T-cell (primary cell): ENCODE measurements at regions of chrX and their contacts with region 1.

Region 1: DNA sequence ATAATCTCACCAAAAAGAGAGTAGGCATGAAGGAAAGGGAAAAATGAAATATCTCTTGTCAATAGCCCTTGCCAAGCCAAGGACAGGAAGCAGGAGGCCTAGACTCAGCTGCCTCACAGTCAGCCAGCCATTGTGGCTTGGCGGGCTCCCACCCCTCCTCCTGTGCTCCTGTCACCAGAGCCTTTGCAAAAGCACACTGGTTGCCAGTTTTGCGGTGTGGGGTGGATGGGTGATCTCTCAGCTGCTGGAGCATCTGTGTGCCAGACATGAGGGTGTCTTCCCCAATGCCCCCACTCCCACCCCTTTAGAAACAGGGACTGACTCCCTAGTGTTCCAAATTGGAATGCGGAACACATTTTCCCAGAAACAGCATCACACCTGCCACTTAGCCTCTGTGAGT is 26.1 kb downstream of the ARHGEF6 start:
- DNase-seq: peak in 31 of 35 experiments; percentile 10 to 57 (median 29)
- ATAC-seq: peak; percentile 64 to 92 (median 76)
- H3K4me3 ChIP-seq: no peak overlapping the region
- H3K4me3 Mint-ChIP-seq: peak overlapping the region in 1 of 3 donors; percentile 6
- H3K27ac ChIP-seq: no peak overlapping the region
- H3K27ac Mint-ChIP-seq: peak overlapping the region in 1 of 2 donors; percentile 29
- H3K4me1 ChIP-seq: peaks cover 3 to 5% of the 10 kb centered on the region in 2 experiments
- H3K4me1 Mint-ChIP-seq: peaks cover 49 to 77% (median 68%) of the 10 kb centered on the region in 3 donors
- H3K27me3 ChIP-seq: no peaks in the 10 kb centered on the region
- H3K27me3 Mint-ChIP-seq: peaks cover 0 to 4% of the 10 kb centered on the region in 2 donors

Region 2: GRCh38 chrX:136618486-136618885 is 136.2 kb before region 1 on chrX:
- CTCF ChIA-PET with region 1: no interaction called
- POLR2A ChIA-PET with region 1: interaction called in 1 of 2 experiments, 11 read pairs
- DNase-seq: no peak
- ATAC-seq: no peak
- H3K4me3 ChIP-seq: no peak overlapping the region
- H3K4me3 Mint-ChIP-seq: peak overlapping the region in 1 of 3 donors; percentile 47
- H3K27ac ChIP-seq: peak overlapping the region; percentile 49
- H3K27ac Mint-ChIP-seq: peak overlapping the region; percentile 69 to 88
- H3K4me1 ChIP-seq: peaks cover 9 to 46% of the 10 kb centered on the region in 2 experiments
- H3K4me1 Mint-ChIP-seq: peaks cover 46 to 61% (median 58%) of the 10 kb centered on the region in 3 donors
- H3K27me3 ChIP-seq: no peaks in the 10 kb centered on the region
- H3K27me3 Mint-ChIP-seq: no peaks in the 10 kb centered on the region

Region 3: GRCh38 chrX:136733613-136734012 is 21.0 kb before region 1 on chrX:
- CTCF ChIA-PET with region 1: no interaction called
- POLR2A ChIA-PET with region 1: no interaction called
- DNase-seq: no peak
- ATAC-seq: no peak
- H3K4me3 ChIP-seq: no peak overlapping the region
- H3K4me3 Mint-ChIP-seq: no peak overlapping the region
- H3K27ac ChIP-seq: no peak overlapping the region
- H3K27ac Mint-ChIP-seq: peak overlapping the region; percentile 5 to 29
- H3K4me1 ChIP-seq: peaks cover 0 to 3% of the 10 kb centered on the region in 2 experiments
- H3K4me1 Mint-ChIP-seq: peaks cover 24 to 50% (median 30%) of the 10 kb centered on the region in 3 donors
- H3K27me3 ChIP-seq: no peaks in the 10 kb centered on the region
- H3K27me3 Mint-ChIP-seq: peaks cover 0 to 8% of the 10 kb centered on the region in 2 donors

Region 4: DNA sequence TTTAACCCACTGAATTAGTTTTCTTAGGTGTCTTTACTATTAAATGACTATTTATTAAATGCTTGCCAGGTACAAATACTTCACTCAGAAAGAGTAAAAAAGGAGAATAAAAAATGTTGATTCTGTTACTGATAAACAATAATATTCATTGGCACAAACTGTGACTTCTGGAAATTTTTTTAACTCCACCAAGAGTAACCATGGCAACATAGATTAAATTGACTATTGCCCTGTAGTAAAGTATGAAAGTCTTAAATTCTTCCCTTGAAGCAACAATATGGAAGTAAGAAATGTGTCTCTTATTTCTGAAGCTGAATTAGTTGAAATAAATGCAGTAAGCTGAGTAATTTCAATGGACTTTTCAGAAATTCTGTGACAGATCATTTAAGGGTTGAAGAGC is 1790.7 kb after region 1 on chrX:
- CTCF ChIA-PET with region 1: no interaction called
- POLR2A ChIA-PET with region 1: no interaction called
- DNase-seq: no peak
- ATAC-seq: no peak
- H3K4me3 ChIP-seq: no peak overlapping the region
- H3K4me3 Mint-ChIP-seq: no peak overlapping the region
- H3K27ac ChIP-seq: no peak overlapping the region
- H3K27ac Mint-ChIP-seq: no peak overlapping the region
- H3K4me1 ChIP-seq: no peaks in the 10 kb centered on the region
- H3K4me1 Mint-ChIP-seq: no peaks in the 10 kb centered on the region
- H3K27me3 ChIP-seq: no peaks in the 10 kb centered on the region
- H3K27me3 Mint-ChIP-seq: peaks cover 0 to 4% of the 10 kb centered on the region in 2 donors